ENCODE measurements at regions of chr19 and their contacts with region 1.

Region 1: DNA sequence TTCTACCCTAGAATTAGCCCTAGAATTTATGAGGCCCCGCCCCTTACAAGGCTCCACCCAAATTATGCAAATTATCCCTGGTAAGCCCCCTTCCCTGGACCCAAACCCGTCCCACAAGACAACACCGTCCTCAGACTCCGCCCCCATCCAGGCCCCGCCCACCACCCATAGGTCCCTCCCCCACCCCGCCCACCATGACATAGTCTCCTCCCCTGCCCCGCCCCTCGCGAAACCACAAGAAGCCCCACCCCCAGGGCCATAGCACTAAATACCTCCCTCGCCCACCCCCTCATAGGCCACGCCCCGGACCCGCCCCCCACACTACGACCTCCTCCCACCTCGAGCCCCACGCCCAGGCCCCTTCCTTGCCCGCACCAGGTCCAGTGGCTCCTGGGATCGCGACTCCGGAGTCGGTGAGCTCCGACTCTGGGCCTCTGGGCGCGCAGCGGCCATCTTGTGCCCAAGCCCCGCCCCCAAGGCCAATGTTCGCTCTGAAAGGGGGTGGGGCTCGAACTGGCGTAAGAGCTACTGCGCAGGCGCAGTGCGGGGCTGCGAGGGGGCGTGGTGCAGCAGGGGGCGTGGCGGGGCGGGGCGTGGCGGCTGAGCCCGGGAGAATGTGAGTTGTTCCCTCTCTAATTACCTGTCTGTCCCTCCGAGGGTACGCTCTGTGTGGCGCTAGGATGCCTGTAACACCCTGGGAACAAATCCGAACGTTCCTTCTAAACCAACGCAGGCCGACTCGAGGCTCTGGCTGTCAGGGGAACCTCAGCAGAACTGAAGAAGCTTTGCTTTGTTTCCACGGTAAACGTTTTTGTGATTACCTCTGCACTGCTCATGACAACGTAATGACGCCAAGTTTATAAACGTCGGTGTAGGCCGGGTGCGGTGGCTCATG is at the start of gene ZNF784:
- DNase-seq: peak; percentile 93 to 95
- ATAC-seq: peak; percentile 92 to 97 (median 95)
- H3K4me3 ChIP-seq: peak within 1 kb of the TSS; percentile 32 to 63 (median 58)
- H3K27ac ChIP-seq: peak within 1 kb of the TSS; percentile 85 to 97 (median 92)
- H3K4me1 ChIP-seq: peaks cover 5 to 44% (median 15%) of the 10 kb centered on the region in 9 donors
- H3K27me3 ChIP-seq: no peaks in the 10 kb centered on the region
- CTCF ChIP-seq: no peak
- total RNA-seq, gene ZNF784: 8.9 to 16.4 (median 12.2) TPM

Region 2: GRCh38 chr19:55580628-55581144 is 43.7 kb before region 1 on chr19 and contains the start of gene ZNF579:
- intact Hi-C with region 1: no loop called
- DNase-seq: peak; percentile 87 to 92
- ATAC-seq: peak; percentile 86 to 95 (median 89)
- H3K4me3 ChIP-seq: peak within 1 kb of the TSS; percentile 84 to 100 (median 94)
- H3K27ac ChIP-seq: peak within 1 kb of the TSS; percentile 94 to 99 (median 96)
- H3K4me1 ChIP-seq: peaks cover 0 to 22% (median 16%) of the 10 kb centered on the region in 9 donors
- H3K27me3 ChIP-seq: peaks cover 0 to 10% (median 0%) of the 10 kb centered on the region in 7 donors
- CTCF ChIP-seq: no peak
- total RNA-seq, gene ZNF579: 7.1 to 16.9 (median 9.6) TPM

Region 3: DNA sequence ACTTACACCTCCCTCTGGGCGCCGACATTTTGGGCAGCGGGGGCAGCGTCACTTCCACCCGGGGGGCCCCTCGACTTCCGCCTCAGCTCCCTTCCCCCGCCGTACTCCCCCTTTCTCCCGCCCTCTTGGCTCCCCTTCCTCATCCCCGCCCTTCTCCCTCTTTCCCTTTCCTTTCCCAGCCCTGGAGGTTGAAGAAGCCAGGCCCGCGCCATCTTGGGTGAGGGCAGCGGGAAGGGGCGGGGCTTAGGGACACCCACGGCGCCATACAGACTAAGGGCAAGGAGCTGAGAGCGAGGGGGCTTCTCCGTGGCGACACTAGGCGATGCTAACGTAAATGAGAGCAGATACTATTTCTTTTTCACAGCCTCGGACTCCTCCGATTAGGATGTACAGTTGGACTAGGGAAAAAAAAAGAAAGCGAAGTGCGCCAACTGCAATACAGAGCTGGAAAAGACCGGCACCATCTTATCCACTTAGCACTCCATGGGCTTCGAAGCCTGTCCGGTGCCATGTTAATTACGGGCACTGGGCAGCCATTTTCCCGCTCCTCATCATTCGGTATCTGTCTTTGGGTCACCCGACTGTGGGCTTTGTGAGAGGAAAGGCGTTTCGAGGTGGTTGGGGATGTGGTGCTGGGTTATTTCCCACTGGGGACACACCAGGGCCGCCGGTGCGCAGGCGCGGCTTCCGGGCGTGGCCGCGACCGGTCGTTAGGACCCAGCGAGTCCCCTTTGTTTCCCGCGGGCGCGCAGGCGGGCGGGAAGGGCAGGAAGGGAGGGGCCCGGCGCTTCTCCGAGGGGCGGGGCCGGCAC is 24.7 kb before region 1 on chr19 and contains the start of gene FIZ1:
- intact Hi-C with region 1: loop called in 1 of 10 experiments (anchors 1 kb)
- DNase-seq: peak; percentile 98 to 99
- ATAC-seq: peak; percentile 86 to 96 (median 94)
- H3K4me3 ChIP-seq: peak within 1 kb of the TSS; percentile 54 to 94 (median 76)
- H3K27ac ChIP-seq: peak within 1 kb of the TSS; percentile 96 to 100 (median 98)
- H3K4me1 ChIP-seq: peaks cover 4 to 31% (median 24%) of the 10 kb centered on the region in 9 donors
- H3K27me3 ChIP-seq: no peaks in the 10 kb centered on the region
- CTCF ChIP-seq: no peak
- total RNA-seq, gene FIZ1: 11.6 to 18.8 (median 13.5) TPM

Region 4: DNA sequence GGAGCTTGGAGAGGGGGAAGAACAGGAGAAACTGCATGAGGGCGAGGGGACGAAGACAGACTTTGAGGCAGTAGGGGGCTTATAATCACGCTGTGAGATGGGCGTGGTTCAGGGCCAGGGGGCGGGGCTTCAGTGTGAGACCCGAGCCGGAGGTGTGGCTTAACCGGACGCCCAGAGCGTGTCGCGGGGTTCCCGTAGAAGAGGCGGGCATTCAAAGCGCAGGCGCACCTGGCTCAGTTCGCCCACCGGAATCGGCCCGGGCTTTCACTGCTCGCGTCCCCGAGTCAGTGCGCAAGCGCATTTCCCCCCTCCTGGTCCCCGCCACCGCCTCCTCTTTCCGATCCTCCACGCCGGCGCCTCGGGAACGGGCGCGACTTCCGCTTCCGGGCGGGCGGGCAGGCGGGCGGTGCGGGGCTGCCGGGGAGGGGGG is 19.1 kb before region 1 on chr19:
- intact Hi-C with region 1: loop called in 1 of 10 experiments (anchors 2 kb)
- DNase-seq: peak; percentile 98
- ATAC-seq: peak; percentile 86 to 93 (median 89)
- H3K4me3 ChIP-seq: peak overlapping the region; percentile 51 to 85 (median 77)
- H3K27ac ChIP-seq: peak overlapping the region; percentile 84 to 98 (median 96)
- H3K4me1 ChIP-seq: peaks cover 4 to 49% (median 30%) of the 10 kb centered on the region in 9 donors
- H3K27me3 ChIP-seq: no peaks in the 10 kb centered on the region
- CTCF ChIP-seq: no peak